CD4-positive, alpha-beta memory T cell (primary cell): ENCODE measurements at regions of chr1 and their contacts with region 1.

Region 1: GRCh38 chr1:151254217-151255213 is at the start of gene PSMD4:
- DNase-seq: peak; percentile 93 to 96 (median 94)
- H3K4me3 ChIP-seq: peak within 1 kb of the TSS; percentile 53 to 88
- H3K4me3 Mint-ChIP-seq: peak within 1 kb of the TSS; percentile 92 to 100 (median 96)
- H3K27ac ChIP-seq: peak within 1 kb of the TSS; percentile 65
- H3K27ac Mint-ChIP-seq: peak within 1 kb of the TSS; percentile 95 to 99 (median 97)
- H3K4me1 ChIP-seq: peaks cover 26% of the 10 kb centered on the region
- H3K4me1 Mint-ChIP-seq: peaks cover 25 to 47% (median 34%) of the 10 kb centered on the region in 4 donors
- H3K27me3 ChIP-seq: no peaks in the 10 kb centered on the region
- H3K27me3 Mint-ChIP-seq: no peaks in the 10 kb centered on the region
- total RNA-seq, gene PSMD4: 143 to 151 TPM

Region 2: DNA sequence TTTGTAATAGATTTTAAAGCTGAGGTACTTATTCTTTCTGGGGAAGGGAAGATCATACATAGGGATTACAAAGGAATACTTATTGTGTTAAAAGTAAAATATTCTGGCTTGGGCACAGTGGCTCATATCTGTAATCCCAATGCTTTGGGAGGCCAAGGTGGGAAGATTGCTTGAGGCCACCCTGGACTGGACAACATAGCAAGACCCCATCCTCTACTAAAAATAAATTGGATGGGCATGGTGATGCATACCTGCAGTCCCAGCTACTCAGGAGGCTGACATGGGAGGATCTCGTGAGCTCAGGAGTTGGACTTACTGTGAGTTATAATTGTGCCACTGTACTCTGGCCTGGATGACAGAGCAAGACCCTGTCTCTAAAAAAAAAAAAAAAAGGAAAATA is 156.4 kb before region 1 on chr1:
- CTCF ChIA-PET with region 1: interaction called, 71 read pairs
- POLR2A ChIA-PET with region 1: interaction called, 3 read pairs
- intact Hi-C with region 1: loop called (anchors 1 kb)
- DNase-seq: no peak
- H3K4me3 ChIP-seq: no peak overlapping the region
- H3K4me3 Mint-ChIP-seq: no peak overlapping the region
- H3K27ac ChIP-seq: no peak overlapping the region
- H3K27ac Mint-ChIP-seq: no peak overlapping the region
- H3K4me1 ChIP-seq: no peaks in the 10 kb centered on the region
- H3K4me1 Mint-ChIP-seq: no peaks in the 10 kb centered on the region
- H3K27me3 ChIP-seq: no peaks in the 10 kb centered on the region
- H3K27me3 Mint-ChIP-seq: no peaks in the 10 kb centered on the region

Region 3: GRCh38 chr1:151124763-151125403 is 129.6 kb before region 1 on chr1:
- CTCF ChIA-PET with region 1: no interaction called
- POLR2A ChIA-PET with region 1: no interaction called
- intact Hi-C with region 1: no loop called
- DNase-seq: peak in 2 of 5 donors; percentile 13 to 24
- H3K4me3 ChIP-seq: no peak overlapping the region
- H3K4me3 Mint-ChIP-seq: peak overlapping the region in 6 of 8 donors; percentile 6 to 60 (median 35)
- H3K27ac ChIP-seq: no peak overlapping the region
- H3K27ac Mint-ChIP-seq: peak overlapping the region in 5 of 7 donors; percentile 63 to 87 (median 80)
- H3K4me1 ChIP-seq: no peaks in the 10 kb centered on the region
- H3K4me1 Mint-ChIP-seq: peaks cover 4 to 9% (median 8%) of the 10 kb centered on the region in 4 donors
- H3K27me3 ChIP-seq: no peaks in the 10 kb centered on the region
- H3K27me3 Mint-ChIP-seq: no peaks in the 10 kb centered on the region

Region 4: GRCh38 chr1:151165738-151166505 is 88.6 kb before region 1 on chr1 and contains the starts of genes LYSMD1 and SCNM1:
- CTCF ChIA-PET with region 1: interaction called, 4 read pairs
- POLR2A ChIA-PET with region 1: interaction called, 4 read pairs
- intact Hi-C with region 1: loop called (anchors 1 kb)
- DNase-seq: peak; percentile 97 to 98 (median 97)
- H3K4me3 ChIP-seq: peak within 1 kb of the TSS; percentile 91 to 99
- H3K4me3 Mint-ChIP-seq: peak within 1 kb of the TSS; percentile 94 to 100 (median 98)
- H3K27ac ChIP-seq: peak within 1 kb of the TSS; percentile 73
- H3K27ac Mint-ChIP-seq: peak within 1 kb of the TSS; percentile 93 to 99 (median 98)
- H3K4me1 ChIP-seq: peaks cover 42% of the 10 kb centered on the region
- H3K4me1 Mint-ChIP-seq: peaks cover 29 to 62% (median 47%) of the 10 kb centered on the region in 4 donors
- H3K27me3 ChIP-seq: no peaks in the 10 kb centered on the region
- H3K27me3 Mint-ChIP-seq: peaks cover 2% of the 10 kb centered on the region in 2 donors
- total RNA-seq, gene LYSMD1: 1.0 to 1.3 TPM
- total RNA-seq, gene SCNM1: 57.4 to 61.4 TPM

Region 5: DNA sequence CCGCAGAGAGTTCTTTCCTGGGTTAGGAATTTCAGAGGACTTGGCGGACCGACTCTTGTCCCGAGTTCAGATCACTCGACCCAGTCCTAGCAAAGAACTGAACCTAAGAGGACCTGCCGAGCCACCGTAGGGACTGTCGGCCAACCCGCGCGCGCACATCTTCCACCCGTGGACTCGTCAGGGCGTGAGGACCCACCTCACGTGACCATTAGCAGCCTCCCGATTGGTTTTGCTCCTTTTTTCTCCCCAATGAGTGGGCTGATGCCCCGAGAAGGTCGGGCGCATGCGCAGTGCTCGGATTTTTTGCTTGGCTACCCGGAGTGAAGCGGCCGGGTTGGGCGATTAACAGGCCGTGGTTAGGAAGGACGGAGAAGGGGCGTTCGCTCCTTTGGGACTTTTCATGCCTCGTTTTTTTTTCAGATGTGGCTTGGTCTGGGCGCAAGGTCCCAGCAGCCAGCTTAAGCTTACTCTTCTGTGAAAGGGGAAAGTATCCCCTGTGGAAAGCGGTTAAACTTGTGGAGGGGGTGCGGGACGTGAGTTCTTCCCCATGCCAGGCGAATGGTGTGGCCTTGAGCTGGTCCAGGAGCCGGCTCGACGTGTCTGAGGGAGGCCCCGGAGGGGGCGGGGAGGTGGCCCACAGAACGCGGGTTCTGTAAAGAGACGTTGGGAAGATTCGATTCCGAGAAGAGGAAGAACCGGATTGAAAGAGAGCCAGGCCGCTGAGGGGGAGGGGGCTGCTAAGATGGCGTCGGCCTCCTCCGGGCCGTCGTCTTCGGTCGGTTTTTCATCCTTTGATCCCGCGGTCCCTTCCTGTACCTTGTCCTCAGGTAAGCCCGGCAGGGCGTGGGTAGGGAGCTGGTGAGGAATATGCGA is 56.0 kb before region 1 on chr1 and contains the start of gene PIP5K1A:
- CTCF ChIA-PET with region 1: interaction called, 20 read pairs
- POLR2A ChIA-PET with region 1: interaction called, 7 read pairs
- intact Hi-C with region 1: loop called (anchors 1 kb)
- DNase-seq: peak; percentile 96 to 99 (median 98)
- H3K4me3 ChIP-seq: peak within 1 kb of the TSS; percentile 89 to 99
- H3K4me3 Mint-ChIP-seq: peak within 1 kb of the TSS; percentile 96 to 100 (median 98)
- H3K27ac ChIP-seq: peak within 1 kb of the TSS; percentile 79
- H3K27ac Mint-ChIP-seq: peak within 1 kb of the TSS; percentile 93 to 100 (median 97)
- H3K4me1 ChIP-seq: peaks cover 34% of the 10 kb centered on the region
- H3K4me1 Mint-ChIP-seq: peaks cover 29 to 53% (median 41%) of the 10 kb centered on the region in 4 donors
- H3K27me3 ChIP-seq: no peaks in the 10 kb centered on the region
- H3K27me3 Mint-ChIP-seq: peaks cover 0 to 2% of the 10 kb centered on the region in 2 donors
- total RNA-seq, gene PIP5K1A: 50.8 to 53.1 TPM

Region 6: DNA sequence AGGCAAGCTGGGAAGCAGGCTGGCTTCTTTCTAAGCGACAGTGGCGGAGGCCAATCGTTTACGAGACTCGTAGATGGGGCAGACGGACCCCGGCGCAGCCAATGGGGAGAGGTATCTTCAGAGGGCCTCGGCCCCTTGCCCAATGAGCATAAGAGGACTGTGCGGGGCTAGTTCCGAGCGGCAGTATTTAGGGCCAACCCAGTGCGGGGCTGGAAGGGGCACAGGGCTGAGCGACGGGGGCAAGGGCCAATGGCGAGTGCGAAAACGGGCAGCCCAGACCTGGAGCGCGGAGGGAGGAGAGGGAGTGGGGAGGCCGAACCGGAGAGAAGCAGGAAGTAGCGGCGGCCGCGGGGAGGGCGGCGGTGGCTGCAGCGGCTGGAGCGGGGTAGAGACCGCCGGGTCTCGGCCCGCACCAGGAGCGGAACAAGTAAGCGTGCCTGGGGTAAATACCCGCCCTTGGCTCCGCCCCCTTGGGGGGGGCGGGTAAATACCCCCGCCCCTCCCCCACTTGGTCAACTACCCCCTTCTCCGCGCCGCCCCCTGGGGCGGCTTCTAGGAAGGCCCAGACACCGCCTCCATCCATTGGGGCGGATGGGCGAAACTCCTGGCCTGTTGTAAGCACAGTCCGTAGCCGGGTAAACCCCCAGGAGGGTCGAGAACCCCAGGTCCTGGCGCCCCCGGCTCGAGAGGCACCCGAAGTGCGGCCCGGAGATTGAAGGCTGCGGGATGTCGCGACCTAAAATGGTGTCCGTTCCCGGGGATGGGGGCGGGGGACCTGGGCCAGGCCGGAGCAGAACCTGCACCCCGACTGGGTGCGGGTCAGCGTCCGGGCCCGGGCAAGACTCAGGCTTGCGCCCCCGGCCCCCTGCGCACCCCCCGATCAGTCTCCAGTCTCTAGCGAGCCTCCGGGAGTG is 27.7 kb after region 1 on chr1 and contains the start of gene ZNF687:
- CTCF ChIA-PET with region 1: interaction called, 7 read pairs
- POLR2A ChIA-PET with region 1: interaction called, 25 read pairs
- intact Hi-C with region 1: loop called (anchors 1 kb)
- DNase-seq: peak; percentile 99
- H3K4me3 ChIP-seq: peak within 1 kb of the TSS; percentile 71 to 99
- H3K4me3 Mint-ChIP-seq: peak within 1 kb of the TSS; percentile 95 to 99 (median 98)
- H3K27ac ChIP-seq: peak within 1 kb of the TSS; percentile 94
- H3K27ac Mint-ChIP-seq: peak within 1 kb of the TSS; percentile 96 to 100 (median 99)
- H3K4me1 ChIP-seq: peaks cover 25% of the 10 kb centered on the region
- H3K4me1 Mint-ChIP-seq: peaks cover 14 to 47% (median 33%) of the 10 kb centered on the region in 4 donors
- H3K27me3 ChIP-seq: no peaks in the 10 kb centered on the region
- H3K27me3 Mint-ChIP-seq: no peaks in the 10 kb centered on the region
- total RNA-seq, gene ZNF687: 39.2 to 39.3 TPM

Region 7: DNA sequence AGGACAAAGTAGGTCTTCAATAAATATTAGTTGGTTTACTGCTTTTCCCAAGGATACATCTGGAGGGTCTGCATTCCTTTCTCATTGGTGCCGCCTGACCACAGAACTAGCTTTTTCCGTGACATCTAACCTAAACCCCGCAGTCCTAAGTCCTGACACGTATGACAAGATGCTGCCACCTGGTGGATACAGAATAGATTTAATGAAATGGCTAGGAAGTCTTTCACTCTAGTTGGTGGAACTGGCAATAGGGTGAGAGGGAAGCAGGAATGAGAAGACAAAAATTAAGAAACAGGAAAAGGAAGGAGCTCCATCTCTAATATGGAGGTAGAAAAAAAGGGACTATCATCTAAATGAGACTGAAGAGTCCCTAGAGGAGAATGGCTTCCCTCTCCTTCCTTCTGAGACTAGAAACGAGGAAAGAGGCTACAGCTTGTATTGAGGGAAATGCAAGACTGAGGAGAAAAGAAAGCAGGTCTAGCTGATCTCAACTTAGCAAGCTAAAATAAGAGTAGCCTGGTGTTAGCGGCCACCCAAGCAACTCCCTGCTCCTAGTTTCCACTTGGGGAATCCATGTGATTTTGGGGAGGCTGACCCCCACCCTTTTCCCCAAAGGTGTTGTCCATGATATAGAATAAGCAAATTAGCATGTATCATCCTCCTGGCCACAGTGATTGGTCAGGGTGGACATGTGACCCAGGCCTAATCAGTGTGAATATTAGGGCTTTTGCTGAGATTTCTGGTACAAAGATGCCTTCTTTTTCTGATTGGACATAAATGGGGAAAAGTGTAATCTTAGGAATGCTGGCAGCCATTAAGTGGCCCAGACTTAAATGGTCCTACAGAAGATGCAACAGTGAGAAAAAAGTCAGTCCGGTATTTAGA is 86.6 kb after region 1 on chr1:
- CTCF ChIA-PET with region 1: interaction called, 11 read pairs
- POLR2A ChIA-PET with region 1: no interaction called
- intact Hi-C with region 1: loop called (anchors 2 kb)
- DNase-seq: peak; percentile 66 to 75 (median 69)
- H3K4me3 ChIP-seq: no peak overlapping the region
- H3K4me3 Mint-ChIP-seq: peak overlapping the region in 2 of 8 donors; percentile 4 to 22
- H3K27ac ChIP-seq: peak overlapping the region; percentile 31
- H3K27ac Mint-ChIP-seq: peak overlapping the region; percentile 1 to 83 (median 52)
- H3K4me1 ChIP-seq: peaks cover 21% of the 10 kb centered on the region
- H3K4me1 Mint-ChIP-seq: peaks cover 17 to 29% (median 21%) of the 10 kb centered on the region in 4 donors
- H3K27me3 ChIP-seq: no peaks in the 10 kb centered on the region
- H3K27me3 Mint-ChIP-seq: no peaks in the 10 kb centered on the region